ENCODE measurements at regions of chr1 and their contacts with region 1.

Region 1: DNA sequence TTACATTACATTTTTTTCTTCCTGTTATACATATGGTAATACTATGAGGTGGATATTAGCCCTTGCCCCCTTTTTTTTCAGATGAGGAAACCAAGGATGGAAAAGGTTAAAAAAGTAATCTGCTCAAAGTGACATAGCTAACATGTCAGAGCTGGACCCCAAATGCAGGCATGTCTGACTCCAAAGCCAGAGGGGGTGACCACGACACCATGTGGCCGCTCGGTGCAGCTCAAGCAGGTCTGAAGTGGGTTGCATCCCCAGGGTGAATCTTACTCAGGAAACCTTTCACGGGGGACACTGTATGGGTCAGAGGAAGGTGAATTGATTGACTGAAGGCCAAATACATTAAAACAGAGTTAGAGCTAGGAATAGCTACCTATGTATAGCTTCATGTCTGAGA is 34.8 kb downstream of the CD34 start:
- DNase-seq: no peak
- ATAC-seq: no peak
- H3K4me3 ChIP-seq: no peak overlapping the region
- H3K4me3 Mint-ChIP-seq: no peak overlapping the region
- H3K27ac ChIP-seq: no peak overlapping the region
- H3K27ac Mint-ChIP-seq: peak overlapping the region in 1 of 2 donors; percentile 71
- H3K4me1 ChIP-seq: peaks cover 9 to 28% of the 10 kb centered on the region in 2 experiments
- H3K4me1 Mint-ChIP-seq: peaks cover 50 to 58% (median 52%) of the 10 kb centered on the region in 3 donors
- H3K27me3 ChIP-seq: no peaks in the 10 kb centered on the region
- H3K27me3 Mint-ChIP-seq: no peaks in the 10 kb centered on the region

Region 2: GRCh38 chr1:207861442-207862177 is 14.5 kb before region 1 on chr1:
- CTCF ChIA-PET with region 1: interaction called in 1 of 2 experiments, 16 read pairs
- POLR2A ChIA-PET with region 1: interaction called, 3 read pairs
- DNase-seq: peak in 32 of 35 experiments; percentile 22 to 64 (median 40)
- ATAC-seq: peak; percentile 58 to 80 (median 70)
- H3K4me3 ChIP-seq: no peak overlapping the region
- H3K4me3 Mint-ChIP-seq: peak overlapping the region; percentile 43 to 91 (median 54)
- H3K27ac ChIP-seq: peak overlapping the region; percentile 76
- H3K27ac Mint-ChIP-seq: peak overlapping the region; percentile 87 to 92
- H3K4me1 ChIP-seq: peaks cover 26 to 65% of the 10 kb centered on the region in 2 experiments
- H3K4me1 Mint-ChIP-seq: peaks cover 60 to 65% (median 64%) of the 10 kb centered on the region in 3 donors
- H3K27me3 ChIP-seq: no peaks in the 10 kb centered on the region
- H3K27me3 Mint-ChIP-seq: no peaks in the 10 kb centered on the region

Region 3: DNA sequence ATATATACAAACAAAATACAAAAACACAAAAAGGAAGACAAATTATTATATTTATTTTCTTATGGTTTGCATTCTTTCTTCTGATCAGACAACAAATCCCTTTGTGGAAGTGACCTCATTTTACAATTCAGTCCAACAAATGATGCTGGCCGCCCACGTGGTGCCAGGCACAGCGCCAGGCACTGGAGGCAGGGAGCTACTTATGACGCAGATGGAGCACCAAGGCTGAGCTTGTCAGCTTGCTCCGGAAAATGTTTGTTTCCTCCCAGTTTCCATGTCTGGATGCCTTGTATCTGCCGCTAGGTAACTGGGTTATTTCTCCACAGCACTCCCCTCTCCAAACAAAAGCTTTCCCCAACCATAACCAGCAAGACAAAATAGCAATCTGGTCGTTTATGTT is 65.5 kb after region 1 on chr1:
- CTCF ChIA-PET with region 1: no interaction called
- POLR2A ChIA-PET with region 1: interaction called in 1 of 2 experiments, 14 read pairs
- DNase-seq: no peak
- ATAC-seq: no peak
- H3K4me3 ChIP-seq: no peak overlapping the region
- H3K4me3 Mint-ChIP-seq: no peak overlapping the region
- H3K27ac ChIP-seq: no peak overlapping the region
- H3K27ac Mint-ChIP-seq: no peak overlapping the region
- H3K4me1 ChIP-seq: no peaks in the 10 kb centered on the region
- H3K4me1 Mint-ChIP-seq: no peaks in the 10 kb centered on the region
- H3K27me3 ChIP-seq: peaks cover 0 to 17% of the 10 kb centered on the region in 2 experiments
- H3K27me3 Mint-ChIP-seq: peaks cover 24 to 39% of the 10 kb centered on the region in 2 donors

Region 4: DNA sequence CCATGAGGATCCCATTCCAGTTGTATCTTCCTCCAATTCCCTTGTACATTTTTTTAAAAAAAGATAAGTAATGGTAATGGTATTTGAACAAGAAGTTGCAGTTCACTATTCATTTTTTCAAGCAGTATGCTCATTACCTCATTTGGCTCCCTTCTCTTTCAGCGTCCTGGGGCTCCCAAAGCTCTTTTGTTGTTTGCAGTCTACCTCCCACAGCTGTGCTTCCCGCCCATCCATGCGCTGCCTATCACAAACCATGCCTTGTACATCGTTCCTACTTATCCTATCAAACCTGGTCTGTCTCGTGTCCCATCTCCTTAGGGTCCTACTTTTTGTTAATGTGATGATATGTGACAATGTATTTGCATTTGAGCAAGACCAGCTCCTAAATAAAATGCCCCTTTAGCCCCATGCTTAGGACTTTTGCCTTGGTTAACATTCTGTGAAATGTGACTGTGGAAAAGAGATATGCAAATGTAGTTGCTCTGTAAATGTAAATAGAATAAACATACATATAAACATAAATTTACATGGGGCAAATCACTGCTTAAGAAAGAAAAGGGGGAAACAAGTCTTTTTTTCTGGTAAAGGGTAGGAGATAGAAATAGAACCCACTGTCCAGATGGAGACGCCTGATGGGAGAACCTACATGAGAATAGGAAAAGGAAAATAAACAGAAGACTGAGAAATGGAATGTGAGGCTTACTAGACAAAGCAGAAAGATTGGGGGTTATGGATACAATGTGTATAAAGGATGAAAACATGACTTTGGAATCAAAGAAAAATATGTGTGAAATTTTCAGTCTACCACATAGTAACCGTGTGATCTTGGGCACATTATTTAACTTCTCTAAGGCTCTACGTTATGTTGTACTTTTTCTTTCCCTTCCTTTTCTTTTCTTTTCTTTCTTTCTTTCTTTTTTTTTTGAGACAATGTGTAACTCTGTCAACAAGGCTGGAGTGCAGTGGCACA is 427.9 kb after region 1 on chr1:
- CTCF ChIA-PET with region 1: no interaction called
- POLR2A ChIA-PET with region 1: no interaction called
- DNase-seq: no peak
- ATAC-seq: no peak
- H3K4me3 ChIP-seq: no peak overlapping the region
- H3K4me3 Mint-ChIP-seq: no peak overlapping the region
- H3K27ac ChIP-seq: no peak overlapping the region
- H3K27ac Mint-ChIP-seq: no peak overlapping the region
- H3K4me1 ChIP-seq: no peaks in the 10 kb centered on the region
- H3K4me1 Mint-ChIP-seq: no peaks in the 10 kb centered on the region
- H3K27me3 ChIP-seq: no peaks in the 10 kb centered on the region
- H3K27me3 Mint-ChIP-seq: peaks cover 14 to 20% of the 10 kb centered on the region in 2 donors

Measured in T-cell (primary cell).